HepG2 (cell line): ENCODE measurements at regions of chr14 and their contacts with region 1.

Region 1: DNA sequence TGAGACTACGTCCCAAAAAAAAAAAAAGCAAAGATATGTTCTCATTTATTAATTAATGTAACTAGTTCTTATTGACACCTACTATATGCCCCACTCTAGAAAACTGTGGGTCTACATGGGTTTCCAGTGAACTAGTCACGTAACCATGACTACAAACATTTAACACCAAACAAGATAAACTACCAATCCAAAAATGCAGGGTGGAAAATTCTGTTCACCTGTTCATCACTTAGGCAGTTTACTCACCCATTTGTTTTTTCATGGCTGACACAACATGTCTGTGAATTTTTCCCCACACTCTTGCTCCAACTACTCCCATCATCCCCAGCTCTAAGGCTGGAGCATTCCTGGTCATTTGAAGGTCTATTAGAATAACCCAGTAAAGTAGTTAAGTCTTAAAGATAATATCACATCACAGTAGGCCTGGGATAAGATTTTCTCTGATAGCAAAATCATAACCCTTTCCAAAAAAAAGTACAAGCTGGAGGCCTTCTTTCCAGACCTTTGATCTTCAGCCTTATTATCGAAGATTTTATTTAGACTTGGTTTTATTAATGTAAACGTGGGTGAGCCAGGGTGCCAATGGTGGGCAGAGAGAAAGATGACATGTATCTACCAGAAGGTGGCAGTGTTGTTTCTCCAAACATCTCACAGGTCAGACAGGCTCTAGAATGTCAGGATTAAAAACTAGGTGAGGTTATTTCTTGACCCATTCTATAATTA is 61.6 kb upstream of the DAAM1 start:
- DNase-seq: peak; percentile 61
- ATAC-seq: peak; percentile 91
- H3K4me3 ChIP-seq: no peak overlapping the region
- H3K27ac ChIP-seq: no peak overlapping the region
- H3K4me1 ChIP-seq: no peaks in the 10 kb centered on the region
- H3K27me3 ChIP-seq: no peaks in the 10 kb centered on the region
- CTCF ChIP-seq: peak; percentile 83
- EP300 ChIP-seq: no peak
- POLR2A ChIP-seq: no peak
- RAD21 ChIP-seq: peak; percentile 68

Region 2: DNA sequence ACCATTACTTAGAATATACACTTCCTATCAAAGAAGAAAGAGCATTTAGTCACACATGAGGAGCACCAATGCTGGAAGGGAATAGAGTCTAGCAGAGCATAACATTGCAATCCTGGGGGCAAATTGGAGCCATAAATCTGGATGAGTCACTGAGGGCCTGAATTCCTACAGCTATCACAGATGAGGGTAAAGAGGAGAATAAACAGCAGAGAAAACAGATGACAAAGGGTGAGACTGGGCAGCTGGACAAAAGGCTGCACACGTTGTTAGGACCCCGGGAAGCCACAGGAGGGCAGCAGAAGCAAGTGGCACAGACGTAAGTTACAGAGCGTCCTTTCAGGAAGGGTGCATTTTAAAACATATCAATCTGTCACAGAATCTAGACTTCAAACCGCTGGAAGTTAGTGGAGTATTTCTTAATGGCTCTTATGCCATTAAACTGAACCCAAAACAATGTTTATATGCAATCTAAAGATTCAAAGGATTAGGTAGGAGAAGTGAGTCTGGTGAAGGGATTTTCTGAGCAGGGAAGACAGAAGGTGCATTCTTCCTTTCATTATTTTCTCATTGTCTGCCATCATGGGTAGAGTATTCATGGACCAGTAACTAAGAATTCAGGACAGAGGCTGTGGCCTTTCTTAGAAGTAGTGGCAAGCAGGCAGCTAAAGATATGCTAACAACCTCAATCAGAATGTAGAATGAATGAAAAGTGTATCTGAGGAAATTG is 98.2 kb before region 1 on chr14:
- CTCF ChIA-PET with region 1: interaction called, 11 read pairs
- POLR2A ChIA-PET with region 1: no interaction called
- in situ Hi-C with region 1: no loop called
- intact Hi-C with region 1: loop called (anchors 2 kb)
- DNase-seq: peak; percentile 39
- ATAC-seq: peak; percentile 97
- H3K4me3 ChIP-seq: no peak overlapping the region
- H3K27ac ChIP-seq: no peak overlapping the region
- H3K4me1 ChIP-seq: no peaks in the 10 kb centered on the region
- H3K27me3 ChIP-seq: no peaks in the 10 kb centered on the region
- CTCF ChIP-seq: peak; percentile 85
- EP300 ChIP-seq: no peak
- POLR2A ChIP-seq: no peak
- RAD21 ChIP-seq: peak; percentile 66

Region 3: DNA sequence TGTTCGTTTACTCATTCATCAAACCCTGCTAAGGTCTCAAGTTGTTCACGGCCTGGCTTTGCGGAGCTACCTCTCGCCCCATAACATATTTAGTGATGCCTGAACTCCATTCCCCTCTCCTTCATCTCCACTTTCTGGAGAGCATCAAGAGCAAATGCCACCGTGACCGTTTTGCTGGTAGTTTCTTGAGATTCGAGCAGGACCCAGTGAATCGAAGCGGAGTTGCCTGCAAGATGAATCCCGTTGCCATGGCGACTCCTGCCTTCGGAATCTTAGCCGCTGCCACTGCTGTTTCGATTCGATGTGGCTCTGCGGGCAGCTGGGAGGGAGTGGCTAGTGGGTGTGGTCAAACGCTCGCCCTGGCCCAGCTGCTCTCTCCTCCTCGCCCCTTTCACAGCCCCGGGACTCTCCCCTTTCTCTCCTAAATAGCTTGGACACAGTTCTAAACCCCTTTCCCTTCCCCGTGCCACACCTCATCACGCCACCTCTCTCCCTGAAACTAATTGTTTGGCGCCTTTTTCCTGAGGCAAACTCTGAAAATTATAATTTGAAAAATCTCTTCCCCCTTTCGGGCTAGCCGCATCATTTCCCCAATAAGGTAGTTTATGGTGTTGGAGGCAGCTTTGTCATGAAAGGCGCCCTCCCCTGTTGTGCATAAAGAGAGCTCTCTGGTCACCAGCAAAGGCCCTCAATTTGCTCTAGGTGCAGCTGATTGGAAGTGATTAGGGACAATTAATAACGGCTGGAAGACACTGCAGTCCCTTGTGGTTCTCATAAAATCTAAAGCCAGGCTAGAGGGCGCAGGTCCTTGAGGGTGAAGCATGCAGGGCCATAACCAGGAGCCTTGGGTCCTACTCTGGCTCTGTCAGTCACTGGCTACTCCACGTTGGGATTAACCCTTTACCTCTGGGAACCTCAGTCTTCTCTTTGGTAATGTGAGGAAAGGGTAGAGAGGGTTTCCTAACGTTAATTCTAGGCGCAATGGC is 63.2 kb after region 1 on chr14:
- CTCF ChIA-PET with region 1: no interaction called
- POLR2A ChIA-PET with region 1: no interaction called
- in situ Hi-C with region 1: no loop called
- intact Hi-C with region 1: loop called (anchors 2 kb)
- DNase-seq: peak; percentile 75
- ATAC-seq: peak; percentile 36
- H3K4me3 ChIP-seq: peak overlapping the region; percentile 84 to 87 (median 86)
- H3K27ac ChIP-seq: peak overlapping the region; percentile 91
- H3K4me1 ChIP-seq: peaks cover 53% of the 10 kb centered on the region
- H3K27me3 ChIP-seq: peaks cover 0 to 1% of the 10 kb centered on the region in 2 experiments; a peak in 2 of 5 replicates
- CTCF ChIP-seq: peak; percentile 44
- EP300 ChIP-seq: no peak
- POLR2A ChIP-seq: peak in 1 of 2 experiments; percentile 36; a peak in 1 of 4 replicates
- RAD21 ChIP-seq: no peak

Region 4: DNA sequence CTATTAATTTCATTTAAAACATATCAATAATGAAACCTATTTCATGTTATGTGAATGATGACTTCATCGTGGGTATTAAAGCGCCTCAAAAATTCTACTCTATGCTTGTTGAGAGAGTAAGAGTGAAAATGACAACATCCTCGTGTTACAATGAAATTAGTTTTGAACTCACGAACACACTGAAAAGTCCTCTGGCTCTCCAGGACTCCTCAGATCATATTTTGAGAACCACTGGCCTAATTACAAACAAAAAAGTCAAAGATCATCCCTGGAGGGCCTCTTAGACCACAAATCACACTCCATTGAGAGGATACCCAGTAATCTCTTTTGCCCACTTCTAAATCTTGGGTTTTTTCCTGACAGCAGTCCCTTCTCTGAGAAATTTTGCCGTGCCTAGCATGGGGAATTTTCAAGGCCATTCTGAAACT is 80.6 kb after region 1 on chr14:
- CTCF ChIA-PET with region 1: no interaction called
- POLR2A ChIA-PET with region 1: no interaction called
- in situ Hi-C with region 1: no loop called
- intact Hi-C with region 1: no loop called
- DNase-seq: no peak
- ATAC-seq: no peak
- H3K4me3 ChIP-seq: no peak overlapping the region
- H3K27ac ChIP-seq: no peak overlapping the region
- H3K4me1 ChIP-seq: peaks cover 19% of the 10 kb centered on the region
- H3K27me3 ChIP-seq: no peaks in the 10 kb centered on the region
- CTCF ChIP-seq: no peak
- EP300 ChIP-seq: no peak
- POLR2A ChIP-seq: no peak
- RAD21 ChIP-seq: no peak

Region 5: GRCh38 chr14:59262717-59263454 is 136.0 kb after region 1 on chr14:
- CTCF ChIA-PET with region 1: no interaction called
- POLR2A ChIA-PET with region 1: no interaction called
- in situ Hi-C with region 1: no loop called
- intact Hi-C with region 1: loop called (anchors 5 kb)
- DNase-seq: peak; percentile 95
- ATAC-seq: peak; percentile 100
- H3K4me3 ChIP-seq: peak overlapping the region in 2 of 3 experiments; percentile 28 to 38; a peak in 2 of 6 replicates
- H3K27ac ChIP-seq: peak overlapping the region; percentile 84
- H3K4me1 ChIP-seq: peaks cover 47% of the 10 kb centered on the region
- H3K27me3 ChIP-seq: no peaks in the 10 kb centered on the region
- CTCF ChIP-seq: peak; percentile 68
- EP300 ChIP-seq: peak in 1 of 2 experiments; percentile 83; a peak in 2 of 4 replicates
- POLR2A ChIP-seq: no peak
- RAD21 ChIP-seq: peak; percentile 60

Region 6: DNA sequence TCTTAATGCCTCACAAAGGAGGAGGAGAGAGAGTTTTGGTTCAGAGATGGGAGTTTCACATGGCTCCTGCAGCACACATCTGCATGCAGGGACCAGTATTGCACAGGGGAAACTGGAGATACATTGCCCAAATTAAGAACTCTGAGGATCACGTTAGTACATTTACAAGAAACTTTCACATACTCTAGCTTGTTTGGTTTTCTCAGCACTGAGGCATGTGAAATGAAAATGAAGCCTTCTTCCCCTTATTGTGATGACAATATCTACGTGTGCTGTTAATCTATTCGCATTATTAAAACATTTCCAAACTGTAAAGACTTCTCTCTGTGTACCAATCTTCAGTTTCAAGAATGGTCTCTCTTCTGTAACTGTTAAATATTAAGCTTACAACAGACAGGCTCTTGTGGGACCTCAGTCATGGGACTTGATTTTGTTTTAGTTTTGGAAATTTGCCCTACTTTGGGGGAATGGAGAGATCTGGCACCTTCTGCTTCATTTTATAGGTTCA is 186.3 kb after region 1 on chr14:
- CTCF ChIA-PET with region 1: no interaction called
- POLR2A ChIA-PET with region 1: no interaction called
- in situ Hi-C with region 1: no loop called
- intact Hi-C with region 1: loop called (anchors 2 kb)
- DNase-seq: peak; percentile 33
- ATAC-seq: no peak
- H3K4me3 ChIP-seq: peak overlapping the region in 1 of 3 experiments; percentile 1; a peak in 1 of 6 replicates
- H3K27ac ChIP-seq: peak overlapping the region; percentile 78
- H3K4me1 ChIP-seq: peaks cover 80% of the 10 kb centered on the region
- H3K27me3 ChIP-seq: no peaks in the 10 kb centered on the region
- CTCF ChIP-seq: no peak
- EP300 ChIP-seq: no peak
- POLR2A ChIP-seq: no peak
- RAD21 ChIP-seq: no peak

Region 7: DNA sequence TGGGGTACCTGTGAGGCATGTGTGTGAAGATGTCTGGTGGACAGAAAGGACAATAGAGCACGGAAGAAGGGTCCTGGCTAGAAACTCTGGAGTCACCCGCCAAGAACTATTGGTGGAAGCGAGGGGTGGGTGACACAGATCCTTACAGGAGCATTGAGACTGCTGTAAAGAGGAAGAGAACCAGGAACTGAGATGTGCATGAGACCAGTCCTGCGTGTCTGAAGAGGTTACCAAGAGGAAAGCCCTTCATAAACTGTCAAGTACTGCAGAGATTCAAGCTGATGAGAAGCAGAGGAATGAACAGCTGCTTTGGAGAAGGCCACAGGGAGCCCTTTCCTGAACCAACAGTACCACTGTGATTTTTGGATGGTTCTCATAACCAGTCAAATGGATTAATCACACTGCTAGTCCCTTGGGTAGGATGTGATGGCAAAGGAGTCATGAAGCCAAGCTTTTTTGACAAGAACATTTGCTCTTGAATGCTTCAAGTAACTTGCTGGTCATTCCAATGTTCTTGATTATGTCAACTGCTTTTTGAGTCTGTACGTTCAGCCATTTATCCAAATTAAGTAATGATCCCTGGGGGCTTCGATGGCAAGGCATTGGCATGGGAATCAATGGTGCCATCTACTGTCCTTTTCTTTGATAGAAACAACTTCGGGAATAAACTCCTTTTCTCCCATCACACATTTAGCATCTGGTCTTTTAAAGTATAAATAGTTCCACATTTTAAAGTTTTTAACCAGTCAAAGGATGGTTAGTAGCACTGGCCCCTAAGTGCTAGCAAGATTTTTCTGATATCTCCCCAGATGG is 295.4 kb after region 1 on chr14:
- CTCF ChIA-PET with region 1: no interaction called
- POLR2A ChIA-PET with region 1: no interaction called
- in situ Hi-C with region 1: no loop called
- intact Hi-C with region 1: loop called (anchors 1 kb)
- DNase-seq: no peak
- ATAC-seq: no peak
- H3K4me3 ChIP-seq: no peak overlapping the region
- H3K27ac ChIP-seq: no peak overlapping the region
- H3K4me1 ChIP-seq: no peaks in the 10 kb centered on the region
- H3K27me3 ChIP-seq: no peaks in the 10 kb centered on the region
- CTCF ChIP-seq: peak; percentile 48
- EP300 ChIP-seq: no peak
- POLR2A ChIP-seq: no peak
- RAD21 ChIP-seq: no peak

Region 8: GRCh38 chr14:59438195-59438647 is 311.4 kb after region 1 on chr14:
- CTCF ChIA-PET with region 1: interaction called, 70 read pairs
- POLR2A ChIA-PET with region 1: no interaction called
- in situ Hi-C with region 1: loop called (anchors 5 kb)
- intact Hi-C with region 1: no loop called
- DNase-seq: no peak
- ATAC-seq: no peak
- H3K4me3 ChIP-seq: no peak overlapping the region
- H3K27ac ChIP-seq: no peak overlapping the region
- H3K4me1 ChIP-seq: no peaks in the 10 kb centered on the region
- H3K27me3 ChIP-seq: no peaks in the 10 kb centered on the region
- CTCF ChIP-seq: no peak
- EP300 ChIP-seq: no peak
- POLR2A ChIP-seq: no peak
- RAD21 ChIP-seq: no peak

Region 9: GRCh38 chr14:60331201-60332045 is 1204.6 kb after region 1 on chr14:
- CTCF ChIA-PET with region 1: no interaction called
- POLR2A ChIA-PET with region 1: no interaction called
- in situ Hi-C with region 1: no loop called
- intact Hi-C with region 1: no loop called
- DNase-seq: peak; percentile 54
- ATAC-seq: peak; percentile 94
- H3K4me3 ChIP-seq: peak overlapping the region; percentile 52 to 72 (median 62)
- H3K27ac ChIP-seq: no peak overlapping the region
- H3K4me1 ChIP-seq: 0 out of 2 replicates have a peak, but pooled peaks cover 8% of the 10 kb centered on the region
- H3K27me3 ChIP-seq: no peaks in the 10 kb centered on the region; a peak in 1 of 5 replicates
- CTCF ChIP-seq: peak; percentile 84
- EP300 ChIP-seq: no peak
- POLR2A ChIP-seq: no peak
- RAD21 ChIP-seq: peak; percentile 40; the same call in 1 of the 2 replicates